PC-9 (cell line): ENCODE measurements at regions of chr17 and their contacts with region 1.

Region 1: DNA sequence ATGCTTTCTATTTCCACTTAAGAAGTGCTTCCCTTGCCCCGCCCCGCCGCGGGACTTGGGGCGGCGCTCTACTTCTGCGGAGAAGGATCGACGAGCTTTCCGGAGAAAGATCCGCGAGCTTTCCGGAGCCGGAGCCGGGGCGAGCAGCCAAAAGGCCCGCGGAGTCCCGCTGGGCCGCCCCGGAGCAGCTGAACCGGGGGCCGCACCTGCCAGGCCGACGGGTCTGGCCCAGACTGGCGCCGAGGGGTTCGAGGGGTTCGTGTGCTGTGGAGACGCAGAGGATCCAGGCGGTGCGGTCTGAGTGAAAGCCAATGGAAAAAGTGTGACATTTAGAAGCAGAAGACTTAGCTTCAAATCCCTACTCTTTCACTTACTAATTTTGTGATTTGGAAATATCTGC is 50.8 kb downstream of the TBC1D26 start:
- DNase-seq: no peak
- H3K4me3 ChIP-seq: no peak overlapping the region
- H3K27ac ChIP-seq: no peak overlapping the region
- H3K4me1 ChIP-seq: no peaks in the 10 kb centered on the region
- H3K27me3 ChIP-seq: no peaks in the 10 kb centered on the region
- CTCF ChIP-seq: no peak

Region 2: DNA sequence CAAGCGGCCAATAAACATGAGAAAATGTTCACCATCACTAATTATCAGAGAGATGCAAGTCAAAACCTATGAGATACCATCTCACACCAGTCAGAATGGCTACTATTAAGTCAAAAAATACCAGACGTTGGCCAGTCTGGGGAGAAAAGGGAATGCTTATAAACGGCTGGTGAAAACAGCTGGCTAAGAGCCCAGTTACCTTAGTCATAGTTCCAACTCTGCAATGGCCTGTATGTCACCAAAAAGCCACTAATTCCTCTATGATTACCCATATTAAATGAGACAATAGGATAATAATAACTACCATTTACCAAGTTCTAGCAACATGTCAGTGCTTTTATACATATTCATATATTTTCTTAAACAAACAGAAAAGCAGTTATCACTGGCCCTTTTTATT is 272.5 kb before region 1 on chr17:
- CTCF ChIA-PET with region 1: no interaction called
- POLR2A ChIA-PET with region 1: no interaction called
- intact Hi-C with region 1: no loop called
- DNase-seq: peak in 1 of 2 experiments; percentile 4
- H3K4me3 ChIP-seq: no peak overlapping the region
- H3K27ac ChIP-seq: no peak overlapping the region
- H3K4me1 ChIP-seq: no peaks in the 10 kb centered on the region
- H3K27me3 ChIP-seq: no peaks in the 10 kb centered on the region
- CTCF ChIP-seq: no peak

Region 3: GRCh38 chr17:15981208-15981607 is 198.3 kb after region 1 on chr17:
- CTCF ChIA-PET with region 1: interaction called, 28 read pairs
- POLR2A ChIA-PET with region 1: no interaction called
- intact Hi-C with region 1: no loop called
- DNase-seq: peak in 1 of 2 experiments; percentile 93
- H3K4me3 ChIP-seq: peak overlapping the region; percentile 10; the same call in 1 of the 2 replicates
- H3K27ac ChIP-seq: peak overlapping the region; percentile 93
- H3K4me1 ChIP-seq: peaks cover 42% of the 10 kb centered on the region
- H3K27me3 ChIP-seq: no peaks in the 10 kb centered on the region
- CTCF ChIP-seq: no peak

Region 4: GRCh38 chr17:16269658-16270057 is 486.8 kb after region 1 on chr17:
- CTCF ChIA-PET with region 1: no interaction called
- POLR2A ChIA-PET with region 1: no interaction called
- intact Hi-C with region 1: no loop called
- DNase-seq: no peak
- H3K4me3 ChIP-seq: no peak overlapping the region
- H3K27ac ChIP-seq: no peak overlapping the region
- H3K4me1 ChIP-seq: peaks cover 12% of the 10 kb centered on the region
- H3K27me3 ChIP-seq: no peaks in the 10 kb centered on the region
- CTCF ChIP-seq: no peak